ENCODE measurements at regions of chr3 and their contacts with region 1.

Region 1: DNA sequence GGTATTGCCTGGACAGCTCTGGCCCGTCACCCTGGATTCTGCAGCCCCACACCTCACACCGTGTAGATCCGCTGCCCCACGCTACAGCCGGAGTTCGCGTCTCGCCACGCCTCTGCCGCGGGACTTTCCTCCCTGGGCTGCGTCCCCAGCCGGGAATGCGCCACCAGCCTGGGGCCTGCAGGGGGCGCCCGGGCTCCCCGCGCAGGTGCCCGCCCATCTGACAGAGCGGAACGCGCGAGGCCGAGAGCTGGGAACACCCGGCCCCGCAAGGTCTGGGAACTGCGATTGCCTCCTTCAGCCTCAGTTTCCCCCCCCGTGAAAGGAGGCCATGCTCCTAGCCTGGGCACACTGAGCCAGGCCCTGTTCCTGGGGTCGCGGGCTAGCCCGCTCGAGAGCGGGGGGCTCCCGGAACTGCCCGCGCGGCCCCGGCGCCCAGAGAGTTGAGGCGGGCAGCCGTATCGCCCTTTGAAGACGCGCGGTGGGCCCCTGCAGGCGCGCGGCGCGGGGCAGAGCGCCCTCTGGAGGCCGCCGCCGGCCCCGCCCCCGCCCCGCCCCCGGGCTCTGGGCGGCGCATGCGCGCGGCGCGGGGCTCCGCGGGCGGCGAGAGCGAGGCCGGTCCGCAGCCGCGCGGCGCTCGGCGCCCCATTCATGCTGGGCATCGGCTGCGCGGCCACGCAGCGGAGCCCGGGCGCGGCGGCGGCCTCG is at the start of gene PLXNA1:
- DNase-seq: peak; percentile 60 to 78
- H3K4me3 ChIP-seq: peak within 1 kb of the TSS; percentile 66
- H3K4me1 ChIP-seq: peaks cover 5% of the 10 kb centered on the region; the same call in 1 of the 2 replicates
- H3K27me3 ChIP-seq: peaks cover 7% of the 10 kb centered on the region; the same call in 1 of the 2 replicates

Region 2: GRCh38 chr3:126752303-126752842 is 230.2 kb before region 1 on chr3:
- in situ Hi-C with region 1: loop called (anchors 10 kb)
- DNase-seq: peak; percentile 58 to 83
- H3K4me3 ChIP-seq: no peak overlapping the region
- H3K4me1 ChIP-seq: no peaks in the 10 kb centered on the region
- H3K27me3 ChIP-seq: no peaks in the 10 kb centered on the region

Measured in HAP-1 (cell line).